Activated CD4-positive, alpha-beta memory T cell treated with anti-CD3 and anti-CD28 coated beads for 36 hours (primary cell): ENCODE measurements at regions of chr15 and their contacts with region 1.

Region 1: GRCh38 chr15:58933281-58934113 is at the start of gene SLTM:
- DNase-seq: peak; percentile 94
- H3K4me3 Mint-ChIP-seq: peak within 1 kb of the TSS; percentile 96
- H3K27ac Mint-ChIP-seq: peak within 1 kb of the TSS; percentile 99
- H3K4me1 Mint-ChIP-seq: peaks cover 21% of the 10 kb centered on the region
- H3K27me3 Mint-ChIP-seq: no peaks in the 10 kb centered on the region
- total RNA-seq, gene SLTM: 75.7 to 79.2 TPM

Region 2: DNA sequence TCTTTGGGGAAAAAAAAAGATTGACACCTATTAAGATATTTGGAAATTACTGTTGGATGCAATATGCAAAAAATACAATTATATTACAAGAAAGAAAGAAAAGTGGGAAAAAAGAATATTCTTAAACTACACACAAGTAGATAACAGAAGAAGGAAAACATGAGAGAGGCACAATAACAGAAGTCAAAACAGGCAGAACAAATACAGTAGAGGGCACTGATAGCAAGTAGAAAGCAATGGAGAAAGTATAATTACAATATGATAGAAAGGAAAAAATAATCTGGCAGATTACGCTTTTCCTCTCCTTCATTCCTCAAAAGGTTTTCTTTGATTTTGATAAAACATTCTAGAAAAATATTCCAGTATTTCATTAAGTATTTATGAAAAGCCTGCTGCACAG is 256.1 kb before region 1 on chr15:
- CTCF ChIA-PET with region 1: no interaction called
- POLR2A ChIA-PET with region 1: no interaction called
- intact Hi-C with region 1: no loop called
- DNase-seq: no peak
- H3K4me3 Mint-ChIP-seq: no peak overlapping the region
- H3K27ac Mint-ChIP-seq: no peak overlapping the region
- H3K4me1 Mint-ChIP-seq: peaks cover 4% of the 10 kb centered on the region
- H3K27me3 Mint-ChIP-seq: no peaks in the 10 kb centered on the region

Region 3: DNA sequence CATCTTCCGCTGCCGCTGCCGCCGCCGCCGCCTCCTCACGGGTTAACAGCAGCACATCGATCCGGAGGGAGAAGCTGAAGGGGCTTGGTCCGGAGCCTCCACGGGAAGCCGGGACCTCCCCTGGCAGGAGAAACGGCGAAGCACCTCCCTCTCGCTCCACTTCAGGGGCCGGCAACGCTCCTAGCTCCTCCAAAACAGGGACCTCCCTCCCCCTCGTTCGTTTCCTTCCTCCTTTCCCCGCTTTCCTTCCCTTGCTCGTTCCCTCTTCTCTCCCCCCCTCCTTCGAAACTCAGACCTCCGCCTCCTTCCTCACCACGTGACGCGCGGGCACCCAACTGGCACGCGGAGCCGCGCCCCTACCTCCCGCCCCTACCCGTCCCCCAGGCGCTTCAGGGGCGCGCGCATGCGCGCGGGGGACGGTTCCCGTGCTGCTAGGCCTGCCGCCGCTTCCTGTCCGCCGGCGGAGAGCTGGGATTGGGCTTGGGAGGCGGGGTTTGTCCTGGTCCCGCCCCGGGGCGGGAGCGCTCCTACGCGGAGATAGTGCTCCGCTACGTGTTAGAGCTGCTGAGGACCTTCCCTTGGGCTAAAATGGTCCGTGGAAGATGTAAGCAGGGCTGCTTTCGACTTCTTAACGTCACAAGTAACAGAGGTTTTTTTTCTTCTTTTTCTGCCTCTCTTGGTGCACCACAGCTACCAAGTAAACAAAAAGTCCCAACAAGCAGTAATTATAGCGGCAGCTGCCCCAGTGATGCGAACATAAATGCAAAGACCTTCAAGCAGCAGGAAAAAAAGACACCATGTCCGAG is 183.8 kb before region 1 on chr15 and contains the start of gene ADAM10:
- CTCF ChIA-PET with region 1: interaction called, 3 read pairs
- POLR2A ChIA-PET with region 1: no interaction called
- intact Hi-C with region 1: loop called (anchors 1 kb)
- DNase-seq: peak; percentile 99
- H3K4me3 Mint-ChIP-seq: peak within 1 kb of the TSS; percentile 92
- H3K27ac Mint-ChIP-seq: peak within 1 kb of the TSS; percentile 91
- H3K4me1 Mint-ChIP-seq: peaks cover 29% of the 10 kb centered on the region
- H3K27me3 Mint-ChIP-seq: no peaks in the 10 kb centered on the region
- total RNA-seq, gene ADAM10: 80.1 to 82.3 TPM

Region 4: DNA sequence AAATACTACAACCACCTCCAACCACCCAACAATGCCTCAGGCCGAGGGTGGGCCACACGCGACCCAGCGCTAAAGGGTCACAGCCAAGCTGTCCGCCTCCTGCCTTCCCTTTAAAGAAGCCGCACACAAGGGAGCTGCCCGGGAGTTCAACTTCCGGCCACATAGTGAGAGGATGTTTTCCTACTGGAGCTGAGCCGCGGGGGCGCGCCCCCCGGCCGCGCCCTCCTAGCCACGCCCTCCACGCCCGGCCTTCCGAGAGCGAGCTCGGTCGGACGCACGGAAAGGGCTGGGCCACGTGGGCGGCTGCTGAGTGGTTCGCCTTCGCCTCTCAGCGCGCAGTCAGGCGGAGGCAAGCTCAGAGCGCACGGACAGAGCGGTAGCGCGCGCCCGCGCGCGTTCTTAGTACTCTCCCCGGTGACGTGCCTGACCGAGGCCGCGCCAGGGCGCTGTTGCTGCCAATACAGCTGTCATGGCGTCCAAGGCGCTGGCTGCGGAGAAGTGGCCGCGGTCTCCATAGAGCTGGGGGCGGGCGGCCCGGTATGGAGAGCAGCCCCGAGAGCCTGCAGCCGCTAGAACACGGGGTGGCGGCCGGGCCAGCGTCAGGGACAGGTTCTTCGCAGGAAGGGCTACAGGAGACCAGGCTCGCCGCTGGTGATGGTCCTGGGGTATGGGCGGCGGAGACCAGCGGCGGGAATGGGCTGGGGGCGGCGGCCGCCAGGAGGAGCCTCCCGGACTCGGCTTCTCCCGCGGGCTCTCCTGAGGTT is 162.5 kb before region 1 on chr15 and contains the start of gene MINDY2:
- CTCF ChIA-PET with region 1: no interaction called
- POLR2A ChIA-PET with region 1: interaction called, 5 read pairs
- intact Hi-C with region 1: loop called (anchors 1 kb)
- DNase-seq: peak; percentile 97
- H3K4me3 Mint-ChIP-seq: no peak within 1 kb of the TSS
- H3K27ac Mint-ChIP-seq: peak within 1 kb of the TSS; percentile 73
- H3K4me1 Mint-ChIP-seq: peaks cover 9% of the 10 kb centered on the region
- H3K27me3 Mint-ChIP-seq: no peaks in the 10 kb centered on the region
- total RNA-seq, gene MINDY2: 8.0 to 11.6 TPM

Region 5: DNA sequence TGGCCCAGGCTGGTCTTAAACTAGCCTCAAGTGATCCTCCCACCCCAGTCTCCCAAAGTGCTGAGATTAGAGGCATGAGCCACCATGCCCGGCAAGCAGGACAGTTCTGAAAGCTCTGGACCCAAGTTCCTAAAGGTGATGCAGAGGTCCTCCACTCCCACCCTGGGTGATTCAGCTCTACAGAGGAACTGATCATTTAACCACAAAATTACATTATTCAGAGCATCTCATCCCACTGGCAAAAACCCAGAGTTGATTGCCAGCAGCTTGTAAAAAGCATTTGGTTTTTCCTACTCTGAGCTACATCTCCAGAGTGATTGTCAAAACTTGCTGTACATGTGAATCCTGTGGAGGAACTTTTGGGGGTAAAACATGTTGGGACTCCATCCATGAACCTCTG is 60.2 kb before region 1 on chr15:
- CTCF ChIA-PET with region 1: no interaction called
- POLR2A ChIA-PET with region 1: no interaction called
- intact Hi-C with region 1: no loop called
- DNase-seq: no peak
- H3K4me3 Mint-ChIP-seq: no peak overlapping the region
- H3K27ac Mint-ChIP-seq: no peak overlapping the region
- H3K4me1 Mint-ChIP-seq: peaks cover 2% of the 10 kb centered on the region
- H3K27me3 Mint-ChIP-seq: no peaks in the 10 kb centered on the region

Region 6: DNA sequence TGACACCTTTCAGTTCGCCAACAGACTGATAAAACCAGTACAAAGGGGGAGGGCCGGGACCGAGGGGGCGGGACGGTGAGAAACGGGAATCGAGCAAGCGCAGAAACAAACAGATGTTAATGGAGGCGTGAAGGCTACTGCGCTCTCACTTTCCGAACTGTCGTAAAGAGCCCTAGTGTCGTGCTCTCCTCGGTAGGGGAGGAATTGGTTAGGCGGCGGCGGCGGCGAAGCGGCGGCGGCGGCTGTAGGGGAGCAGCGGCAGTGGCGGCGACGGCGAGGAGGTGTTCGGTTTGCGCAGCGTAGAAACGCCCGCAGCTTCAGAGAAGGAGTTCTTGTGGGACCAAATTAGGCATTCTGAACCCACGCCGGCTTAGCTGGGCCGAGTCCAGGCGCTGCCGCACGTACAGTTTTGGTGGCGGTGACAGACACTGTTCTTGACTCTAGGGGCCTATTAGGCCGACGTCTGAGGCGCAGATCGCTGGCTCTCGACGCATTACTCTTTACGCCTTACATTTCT is 54.0 kb after region 1 on chr15 and contains the start of gene RNF111:
- CTCF ChIA-PET with region 1: no interaction called
- POLR2A ChIA-PET with region 1: no interaction called
- intact Hi-C with region 1: loop called (anchors 1 kb)
- DNase-seq: peak; percentile 94
- H3K4me3 Mint-ChIP-seq: peak within 1 kb of the TSS; percentile 96
- H3K27ac Mint-ChIP-seq: peak within 1 kb of the TSS; percentile 87
- H3K4me1 Mint-ChIP-seq: peaks cover 38% of the 10 kb centered on the region
- H3K27me3 Mint-ChIP-seq: no peaks in the 10 kb centered on the region
- total RNA-seq, gene RNF111: 22.6 to 25.0 TPM

Region 7: DNA sequence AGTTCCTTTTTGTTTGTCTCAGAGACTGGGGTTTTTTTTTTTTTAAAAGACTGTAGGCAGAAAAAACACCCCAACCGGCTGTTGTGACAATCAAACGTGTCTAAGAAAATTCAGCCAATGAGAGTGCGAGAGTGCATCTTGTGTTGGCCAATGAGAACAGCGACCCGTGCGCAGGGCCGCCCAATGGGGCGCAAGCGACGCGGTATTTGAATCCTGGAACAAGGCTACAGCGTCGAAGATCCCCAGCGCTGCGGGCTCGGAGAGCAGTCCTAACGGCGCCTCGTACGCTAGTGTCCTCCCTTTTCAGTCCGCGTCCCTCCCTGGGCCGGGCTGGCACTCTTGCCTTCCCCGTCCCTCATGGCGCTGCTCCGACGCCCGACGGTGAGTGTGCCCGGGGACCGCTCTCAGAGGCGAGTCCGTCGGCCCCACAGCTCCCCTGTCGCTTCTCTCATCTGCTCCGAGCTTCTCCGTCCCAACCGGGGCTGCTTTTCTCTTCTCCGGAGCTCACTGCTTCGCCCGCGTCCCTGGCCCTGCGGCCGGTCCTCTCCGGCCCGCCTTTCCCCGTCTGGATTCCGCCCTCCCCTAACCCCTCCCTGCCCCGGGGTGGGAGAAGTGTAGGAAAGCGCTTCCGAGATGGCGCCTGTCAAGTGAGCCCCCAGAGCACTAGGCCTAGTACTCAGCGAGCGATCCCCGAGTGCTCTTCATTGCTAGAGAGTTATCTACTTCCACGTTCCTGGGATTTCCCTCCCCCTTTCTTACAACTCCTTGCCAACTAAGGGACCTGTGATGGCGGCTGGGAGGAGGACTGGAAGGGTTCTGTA is 171.6 kb after region 1 on chr15 and contains the start of gene CCNB2:
- CTCF ChIA-PET with region 1: no interaction called
- POLR2A ChIA-PET with region 1: no interaction called
- intact Hi-C with region 1: loop called (anchors 2 kb)
- DNase-seq: peak; percentile 92
- H3K4me3 Mint-ChIP-seq: peak within 1 kb of the TSS; percentile 92
- H3K27ac Mint-ChIP-seq: peak within 1 kb of the TSS; percentile 88
- H3K4me1 Mint-ChIP-seq: peaks cover 8% of the 10 kb centered on the region
- H3K27me3 Mint-ChIP-seq: no peaks in the 10 kb centered on the region
- total RNA-seq, gene CCNB2: 74.7 to 76.0 TPM